ENCODE measurements at regions of chr18 and their contacts with region 1.

Region 1: DNA sequence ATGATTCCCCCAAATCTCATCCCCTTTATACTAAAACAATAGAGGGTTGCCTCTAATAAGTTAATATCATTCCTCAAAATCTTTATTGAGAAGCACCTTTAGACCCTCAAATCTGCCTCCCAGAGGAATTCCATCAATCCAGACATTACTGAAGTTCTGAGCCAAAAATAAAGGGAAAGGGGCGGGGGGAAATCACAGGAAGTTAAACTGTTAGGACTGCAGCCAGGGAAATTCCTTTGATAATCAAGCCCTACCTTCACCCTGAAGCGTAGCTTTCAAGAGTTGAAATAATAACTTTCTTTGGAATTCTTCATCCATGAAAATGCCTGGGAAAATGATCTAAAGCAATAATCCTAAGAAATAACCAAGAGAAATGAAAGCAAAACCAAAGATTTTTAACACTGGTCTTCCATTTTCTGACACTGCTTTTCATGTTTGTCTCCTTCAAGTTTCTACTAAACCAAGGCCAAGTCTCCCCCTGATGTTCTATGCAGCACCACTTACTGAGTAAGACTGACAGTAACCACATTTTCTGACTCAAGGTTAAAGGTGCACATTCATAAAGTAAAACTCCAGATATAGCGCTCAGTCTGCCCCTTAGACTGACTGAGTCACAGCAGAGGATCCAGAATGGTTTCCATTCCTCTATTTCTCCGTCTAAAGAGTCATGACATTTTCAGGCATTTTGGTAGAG is 78.2 kb downstream of the TCF4 start:
- DNase-seq: peak in 1 of 2 donors; percentile 76
- ATAC-seq: peak in 6 of 8 donors; percentile 25 to 79 (median 59)
- H3K4me3 ChIP-seq: peak overlapping the region in 8 of 10 donors; percentile 15 to 44 (median 38)
- H3K27ac ChIP-seq: peak overlapping the region; percentile 69 to 95 (median 88)
- H3K4me1 ChIP-seq: peaks cover 0 to 73% (median 46%) of the 10 kb centered on the region in 9 donors
- H3K27me3 ChIP-seq: no peaks in the 10 kb centered on the region
- CTCF ChIP-seq: no peak

Region 2: DNA sequence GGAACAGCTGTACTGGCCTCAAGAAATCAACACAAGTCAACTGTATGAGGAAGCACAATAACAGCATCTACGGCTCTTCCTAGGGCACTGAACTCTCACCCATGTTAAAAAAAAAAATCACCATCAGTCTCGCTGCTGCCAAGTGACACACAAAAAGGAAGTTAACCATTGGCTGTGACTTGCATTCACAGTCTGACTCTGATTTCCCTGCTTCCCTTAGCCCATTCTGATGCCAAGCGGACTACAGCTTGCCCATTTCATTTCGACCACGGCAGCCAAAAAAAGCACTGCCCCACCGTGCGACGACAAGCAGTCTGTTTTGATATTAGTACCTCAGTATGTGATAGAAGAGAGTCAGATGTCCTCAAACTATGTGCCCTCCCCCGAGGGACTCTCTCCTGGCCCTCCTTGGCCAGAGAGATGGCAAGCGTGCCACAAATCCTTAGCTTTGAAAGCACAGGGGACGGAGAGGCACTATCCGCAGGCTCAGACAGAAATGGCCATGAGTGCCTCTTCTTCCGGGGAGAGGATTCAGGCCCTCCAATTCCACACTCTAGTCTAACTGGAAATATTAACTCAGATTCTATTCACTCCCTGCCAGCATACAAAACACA is 171.8 kb before region 1 on chr18:
- intact Hi-C with region 1: loop called in 2 of 10 experiments (anchors 10 kb)
- DNase-seq: peak; percentile 34 to 53
- ATAC-seq: peak; percentile 70 to 88 (median 80)
- H3K4me3 ChIP-seq: peak overlapping the region in 7 of 10 donors; percentile 9 to 39 (median 14)
- H3K27ac ChIP-seq: peak overlapping the region; percentile 18 to 91 (median 80)
- H3K4me1 ChIP-seq: peaks cover 2 to 76% (median 56%) of the 10 kb centered on the region in 9 donors
- H3K27me3 ChIP-seq: no peaks in the 10 kb centered on the region
- CTCF ChIP-seq: no peak

Region 3: DNA sequence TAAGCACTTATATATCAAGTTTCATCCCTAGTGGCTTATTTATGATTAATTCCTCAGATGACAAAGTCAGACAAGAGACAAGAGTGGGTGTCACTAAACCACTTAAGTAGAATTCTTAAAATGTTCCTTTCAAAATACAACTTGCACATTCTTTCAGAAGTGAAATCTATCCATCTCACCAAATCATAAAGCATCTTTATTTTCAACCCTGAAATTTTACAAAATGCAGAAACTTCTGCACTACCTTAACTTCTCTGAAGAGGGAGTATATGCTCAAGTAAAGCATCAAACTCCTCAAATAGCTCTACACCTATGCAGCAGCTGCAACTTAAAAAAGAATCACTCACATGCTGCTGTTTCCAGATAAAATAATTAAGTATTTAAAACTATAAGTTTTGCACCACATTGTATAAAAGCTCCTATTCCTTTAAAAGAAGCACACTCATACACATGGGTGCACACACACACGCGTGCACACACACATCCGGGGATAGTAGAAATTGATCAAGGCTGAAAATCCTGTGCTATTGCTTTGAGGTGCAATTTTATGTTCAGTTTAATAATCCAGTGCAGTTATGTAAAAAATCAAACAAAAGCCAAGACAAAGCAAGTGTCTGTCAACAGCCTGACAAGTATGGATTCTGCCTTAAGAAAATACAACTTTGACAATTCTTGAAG is 166.2 kb before region 1 on chr18:
- intact Hi-C with region 1: loop called in 2 of 10 experiments (anchors 10 kb)
- DNase-seq: no peak
- ATAC-seq: peak in 5 of 8 donors; percentile 46 to 67 (median 57)
- H3K4me3 ChIP-seq: no peak overlapping the region
- H3K27ac ChIP-seq: peak overlapping the region in 1 of 10 donors; percentile 1
- H3K4me1 ChIP-seq: peaks cover 2 to 66% (median 24%) of the 10 kb centered on the region in 9 donors
- H3K27me3 ChIP-seq: no peaks in the 10 kb centered on the region
- CTCF ChIP-seq: peak; percentile 24 to 73 (median 61)

Region 4: DNA sequence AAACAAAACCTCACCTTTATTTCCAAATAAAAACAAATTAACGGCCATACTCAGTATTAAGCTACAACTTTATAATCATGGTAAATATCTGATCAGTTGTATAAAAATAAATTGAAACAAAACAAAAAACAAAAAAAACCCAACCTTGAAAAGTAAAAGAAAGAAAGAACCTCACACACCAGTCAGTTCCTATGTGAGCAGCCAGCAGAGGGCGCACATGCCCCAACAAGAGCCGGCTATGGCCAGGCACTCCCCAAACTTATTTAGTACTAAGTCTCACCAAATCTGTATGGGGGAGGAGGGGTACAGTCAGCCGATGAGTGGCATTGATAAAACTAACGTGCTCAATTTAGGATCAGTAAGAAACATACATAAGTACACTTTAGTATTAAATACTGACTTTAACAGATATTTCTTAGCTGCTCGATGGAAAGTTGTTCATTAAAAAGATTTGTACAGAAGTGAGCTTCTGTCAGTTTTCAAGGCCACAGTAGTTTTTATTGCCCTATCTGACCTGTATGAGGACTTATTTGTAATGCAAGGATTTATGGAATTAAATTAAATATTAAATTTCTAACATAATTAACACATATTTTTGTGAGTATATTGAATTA is 94.4 kb before region 1 on chr18:
- intact Hi-C with region 1: loop called in 5 of 10 experiments (anchors 5 kb)
- DNase-seq: peak; percentile 88 to 91
- ATAC-seq: peak; percentile 87 to 93 (median 90)
- H3K4me3 ChIP-seq: no peak overlapping the region
- H3K27ac ChIP-seq: peak overlapping the region in 5 of 10 donors; percentile 14 to 91 (median 54)
- H3K4me1 ChIP-seq: peaks cover 0 to 78% (median 56%) of the 10 kb centered on the region in 9 donors
- H3K27me3 ChIP-seq: no peaks in the 10 kb centered on the region
- CTCF ChIP-seq: peak; percentile 82 to 98 (median 92)

Region 5: DNA sequence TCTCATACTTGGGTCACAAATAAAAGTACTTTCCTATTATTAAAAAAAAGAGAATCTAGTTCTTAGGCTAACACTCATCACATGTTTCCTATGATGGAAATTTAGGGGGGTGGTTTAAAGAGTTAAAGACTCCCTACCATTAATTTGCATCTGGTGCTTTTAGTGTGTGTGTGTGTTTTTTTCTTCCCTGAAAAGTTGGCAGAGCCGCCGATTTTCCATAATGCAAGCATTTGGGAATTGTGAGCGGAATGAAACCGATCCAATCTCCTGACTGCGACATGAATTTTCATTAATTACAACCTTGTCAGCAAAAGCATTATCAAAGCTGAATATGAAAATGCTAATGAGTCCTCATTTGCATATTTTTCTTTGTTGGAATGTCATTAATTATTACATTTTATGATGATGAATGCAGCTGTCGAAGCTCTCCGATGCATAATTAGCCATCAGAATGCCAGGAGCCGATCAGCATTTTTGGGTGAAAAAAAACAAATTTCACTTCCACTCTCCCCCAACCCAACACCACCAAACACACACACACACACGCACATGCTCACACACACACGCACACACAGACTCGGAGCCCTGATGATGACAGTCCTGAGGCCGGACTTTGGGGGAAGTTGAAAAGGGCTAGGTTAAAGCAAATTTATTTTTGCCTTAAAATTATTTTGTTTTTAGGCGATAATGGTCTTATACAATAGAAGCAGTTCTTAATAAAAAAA is 87.2 kb before region 1 on chr18:
- intact Hi-C with region 1: loop called in 6 of 10 experiments (anchors 2 to 5 kb)
- DNase-seq: peak; percentile 27 to 82
- ATAC-seq: peak in 6 of 8 donors; percentile 56 to 75 (median 68)
- H3K4me3 ChIP-seq: peak overlapping the region in 9 of 10 donors; percentile 15 to 53 (median 46)
- H3K27ac ChIP-seq: peak overlapping the region; percentile 73 to 92 (median 80)
- H3K4me1 ChIP-seq: peaks cover 0 to 46% (median 25%) of the 10 kb centered on the region in 9 donors
- H3K27me3 ChIP-seq: no peaks in the 10 kb centered on the region
- CTCF ChIP-seq: no peak

Region 6: DNA sequence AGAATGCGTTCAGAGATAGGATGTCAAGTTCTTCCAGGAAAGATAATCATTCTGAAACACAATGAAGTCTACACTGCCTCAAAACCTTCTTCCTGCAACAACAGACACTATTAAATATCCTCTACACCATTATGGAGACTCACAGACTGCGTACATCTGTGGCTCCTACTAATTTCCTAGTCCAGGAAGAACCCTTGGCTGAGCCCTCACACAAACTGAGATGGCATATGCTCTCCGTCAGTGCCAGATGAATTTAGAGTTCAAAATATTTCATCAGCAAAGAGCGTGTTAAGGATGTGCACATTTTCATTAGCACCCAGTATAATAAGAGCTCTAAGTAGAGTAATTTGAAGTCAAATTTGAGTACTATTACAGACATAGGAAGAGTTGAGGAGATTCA is 39.0 kb before region 1 on chr18:
- intact Hi-C with region 1: loop called in 1 of 10 experiments (anchors 5 kb)
- DNase-seq: no peak
- ATAC-seq: no peak
- H3K4me3 ChIP-seq: no peak overlapping the region
- H3K27ac ChIP-seq: no peak overlapping the region
- H3K4me1 ChIP-seq: peaks cover 0 to 59% (median 9%) of the 10 kb centered on the region in 9 donors
- H3K27me3 ChIP-seq: no peaks in the 10 kb centered on the region
- CTCF ChIP-seq: no peak

Region 7: GRCh38 chr18:55570966-55571365 is 61.2 kb after region 1 on chr18:
- intact Hi-C with region 1: no loop called
- DNase-seq: no peak
- ATAC-seq: no peak
- H3K4me3 ChIP-seq: no peak overlapping the region
- H3K27ac ChIP-seq: no peak overlapping the region
- H3K4me1 ChIP-seq: peaks cover 0 to 45% (median 7%) of the 10 kb centered on the region in 9 donors
- H3K27me3 ChIP-seq: no peaks in the 10 kb centered on the region
- CTCF ChIP-seq: no peak

Region 8: GRCh38 chr18:55633032-55633431 is 123.3 kb after region 1 on chr18:
- intact Hi-C with region 1: no loop called
- DNase-seq: no peak
- ATAC-seq: no peak
- H3K4me3 ChIP-seq: no peak overlapping the region
- H3K27ac ChIP-seq: no peak overlapping the region
- H3K4me1 ChIP-seq: no peaks in the 10 kb centered on the region
- H3K27me3 ChIP-seq: no peaks in the 10 kb centered on the region
- CTCF ChIP-seq: no peak

Region 9: DNA sequence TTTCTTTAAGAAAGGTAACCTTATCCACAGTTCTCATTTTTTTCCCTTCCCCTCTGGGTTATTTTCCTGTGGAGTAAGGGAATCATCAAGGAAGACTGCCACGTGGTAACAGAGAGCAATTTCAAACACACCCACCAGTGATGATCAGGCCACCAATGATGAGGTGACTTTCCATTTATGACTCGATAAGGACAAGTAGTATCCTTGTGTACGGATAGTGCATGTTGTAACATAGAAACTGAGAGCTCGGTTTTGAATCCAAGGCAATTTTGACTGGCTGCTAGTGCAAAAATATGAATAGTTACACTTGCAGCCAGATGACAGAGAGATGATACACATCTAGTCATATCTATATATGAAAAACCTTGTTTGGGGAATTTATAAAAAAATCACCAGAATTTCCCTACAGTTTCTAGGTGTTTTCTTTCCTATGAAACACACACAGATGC is 221.8 kb after region 1 on chr18:
- intact Hi-C with region 1: loop called in 1 of 10 experiments (anchors 10 kb)
- DNase-seq: no peak
- ATAC-seq: peak in 5 of 8 donors; percentile 31 to 61 (median 46)
- H3K4me3 ChIP-seq: no peak overlapping the region
- H3K27ac ChIP-seq: peak overlapping the region; percentile 16 to 84 (median 56)
- H3K4me1 ChIP-seq: peaks cover 0 to 21% (median 17%) of the 10 kb centered on the region in 9 donors
- H3K27me3 ChIP-seq: no peaks in the 10 kb centered on the region
- CTCF ChIP-seq: no peak